IMR-90 (cell line): ENCODE measurements at regions of chr22 and their contacts with region 1.

Region 1: GRCh38 chr22:42856865-42857704 is at the start of gene ARFGAP3:
- DNase-seq: peak; percentile 91
- ATAC-seq: peak; percentile 97
- H3K4me3 ChIP-seq: peak within 1 kb of the TSS; percentile 94
- H3K27ac ChIP-seq: peak within 1 kb of the TSS; percentile 96
- H3K4me1 ChIP-seq: peaks cover 2% of the 10 kb centered on the region; the same call in 1 of the 2 replicates
- H3K27me3 ChIP-seq: no peaks in the 10 kb centered on the region
- CTCF ChIP-seq: no peak
- POLR2A ChIP-seq: peak; percentile 96
- RAD21 ChIP-seq: peak; percentile 12; the same call in 1 of the 2 replicates
- total RNA-seq, gene ARFGAP3: 70.1 and 88.0 TPM in 2 replicates

Region 2: DNA sequence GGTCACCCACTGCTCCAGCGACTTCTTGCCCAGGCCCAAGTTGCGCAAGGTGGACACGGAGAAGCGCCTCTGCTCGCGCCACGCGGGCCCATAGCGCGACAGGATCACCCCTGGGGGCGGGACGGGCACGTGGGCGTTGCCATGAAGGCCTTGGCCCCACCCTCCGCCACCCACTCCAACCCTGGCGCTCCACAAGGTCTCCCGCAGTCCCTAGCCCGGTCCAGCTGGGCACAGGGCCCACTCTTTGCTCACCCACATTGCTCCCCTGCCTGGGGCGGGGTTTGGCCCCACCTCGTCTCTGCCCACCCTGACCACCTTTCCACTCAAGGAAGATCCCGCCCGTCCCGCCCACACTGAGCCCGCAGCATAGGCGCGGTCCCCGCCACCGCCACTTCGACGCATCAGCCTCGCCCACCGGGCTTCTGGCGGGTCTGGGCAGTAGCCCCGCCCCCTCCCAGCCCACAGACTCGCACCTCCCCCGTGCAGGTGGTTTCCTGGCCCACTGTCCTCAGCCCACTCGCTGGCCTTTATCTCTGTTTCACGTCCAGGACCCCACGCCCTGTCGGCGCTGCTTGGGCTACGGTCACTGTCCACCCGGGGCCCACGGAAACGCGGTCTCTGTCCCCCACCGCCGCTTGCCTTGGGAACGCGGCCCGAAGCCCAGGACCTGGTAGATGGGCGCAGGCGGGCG is 714.2 kb before region 1 on chr22:
- CTCF ChIA-PET with region 1: no interaction called
- POLR2A ChIA-PET with region 1: no interaction called
- dilution Hi-C with region 1: no loop called
- in situ Hi-C with region 1: no loop called
- intact Hi-C with region 1: no loop called
- DNase-seq: no peak
- ATAC-seq: no peak
- H3K4me3 ChIP-seq: no peak overlapping the region
- H3K27ac ChIP-seq: no peak overlapping the region
- H3K4me1 ChIP-seq: no peaks in the 10 kb centered on the region
- H3K27me3 ChIP-seq: no peaks in the 10 kb centered on the region
- CTCF ChIP-seq: no peak
- POLR2A ChIP-seq: no peak
- RAD21 ChIP-seq: no peak

Region 3: DNA sequence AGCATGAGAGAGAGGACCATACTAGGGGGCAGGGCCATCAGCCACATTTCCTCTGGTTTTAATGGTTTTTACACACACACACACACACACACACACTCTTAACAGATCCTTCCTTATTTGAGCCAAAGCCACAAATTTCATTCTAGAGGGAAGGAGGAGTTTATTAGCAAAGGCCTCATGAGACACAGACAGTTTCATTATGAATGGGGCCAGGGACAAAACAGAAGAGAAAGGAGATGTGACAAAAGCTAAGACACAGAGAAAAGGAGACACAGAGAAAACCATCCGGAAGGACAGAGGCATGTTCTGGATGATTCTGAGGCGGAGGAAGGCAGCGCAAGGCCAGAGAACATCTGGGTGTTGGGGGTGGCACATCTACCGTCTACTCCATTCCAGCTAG is 32.2 kb after region 1 on chr22:
- CTCF ChIA-PET with region 1: no interaction called
- POLR2A ChIA-PET with region 1: interaction called, 10 read pairs
- dilution Hi-C with region 1: no loop called
- in situ Hi-C with region 1: no loop called
- intact Hi-C with region 1: no loop called
- DNase-seq: no peak
- ATAC-seq: no peak
- H3K4me3 ChIP-seq: no peak overlapping the region
- H3K27ac ChIP-seq: no peak overlapping the region
- H3K4me1 ChIP-seq: no peaks in the 10 kb centered on the region
- H3K27me3 ChIP-seq: no peaks in the 10 kb centered on the region
- CTCF ChIP-seq: no peak
- POLR2A ChIP-seq: no peak
- RAD21 ChIP-seq: no peak